H1 (cell line): ENCODE measurements at regions of chr2 and their contacts with region 1.

Region 1: DNA sequence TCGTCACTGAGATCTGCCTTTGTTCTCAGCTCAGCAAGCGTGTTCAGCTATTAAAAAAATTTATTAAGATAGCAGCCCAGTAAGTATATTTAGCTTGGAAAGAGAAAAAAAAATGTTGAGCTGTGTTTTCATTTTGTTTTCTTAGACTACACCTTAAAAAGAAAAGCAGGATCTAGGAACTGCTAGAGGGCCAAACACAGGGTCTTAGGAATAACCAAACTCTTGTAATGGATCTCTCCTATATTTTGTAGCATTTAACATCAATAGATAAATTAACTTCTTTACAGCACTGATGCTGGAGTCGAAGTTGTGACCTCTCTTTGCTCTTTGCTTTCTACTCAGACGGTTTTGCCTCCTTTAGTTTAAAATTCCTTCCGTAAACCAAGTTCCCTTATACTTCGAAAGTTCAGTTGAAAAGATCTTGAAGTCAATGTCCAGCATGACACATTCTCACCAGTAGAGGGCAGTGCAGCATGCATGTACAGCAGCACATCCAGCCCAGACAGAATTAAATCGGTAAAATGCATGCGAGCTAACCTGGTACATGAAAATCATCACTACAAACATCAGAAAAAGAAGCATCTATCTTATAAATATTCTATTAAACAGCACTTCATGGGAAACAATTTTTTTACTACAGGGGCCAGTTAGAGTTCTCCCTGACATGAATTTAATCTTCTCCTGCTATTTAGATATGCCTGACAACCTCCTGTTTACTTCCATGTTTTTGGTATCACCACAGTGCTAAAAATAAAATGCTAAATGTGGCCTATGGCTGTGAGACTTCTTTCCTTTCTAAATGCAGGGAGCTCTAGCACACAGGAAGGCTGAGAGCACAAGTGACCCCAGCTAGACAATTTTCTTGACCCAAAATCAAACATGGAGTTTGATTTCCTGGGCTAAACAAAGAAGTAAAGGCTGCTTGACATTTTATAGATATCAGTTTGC is 48.2 kb upstream of the MAP3K20 start:
- DNase-seq: peak; percentile 44 to 85
- H3K4me3 ChIP-seq: no peak overlapping the region
- H3K27ac ChIP-seq: no peak overlapping the region
- H3K4me1 ChIP-seq: peaks cover 0 to 3% (median 0%) of the 10 kb centered on the region in 4 experiments; a peak in 1 of 7 replicates
- H3K27me3 ChIP-seq: no peaks in the 10 kb centered on the region
- CTCF ChIP-seq: peak; percentile 57 to 96 (median 83)
- EP300 ChIP-seq: no peak
- POLR2A ChIP-seq: no peak
- RAD21 ChIP-seq: peak; percentile 95 to 96

Region 2: GRCh38 chr2:173037245-173038120 is 10.0 kb after region 1 on chr2:
- CTCF ChIA-PET with region 1: interaction called, 14 read pairs
- POLR2A ChIA-PET with region 1: no interaction called
- DNase-seq: no peak
- H3K4me3 ChIP-seq: no peak overlapping the region
- H3K27ac ChIP-seq: no peak overlapping the region
- H3K4me1 ChIP-seq: no peaks in the 10 kb centered on the region
- H3K27me3 ChIP-seq: no peaks in the 10 kb centered on the region
- CTCF ChIP-seq: no peak
- EP300 ChIP-seq: no peak
- POLR2A ChIP-seq: no peak
- RAD21 ChIP-seq: no peak

Region 3: DNA sequence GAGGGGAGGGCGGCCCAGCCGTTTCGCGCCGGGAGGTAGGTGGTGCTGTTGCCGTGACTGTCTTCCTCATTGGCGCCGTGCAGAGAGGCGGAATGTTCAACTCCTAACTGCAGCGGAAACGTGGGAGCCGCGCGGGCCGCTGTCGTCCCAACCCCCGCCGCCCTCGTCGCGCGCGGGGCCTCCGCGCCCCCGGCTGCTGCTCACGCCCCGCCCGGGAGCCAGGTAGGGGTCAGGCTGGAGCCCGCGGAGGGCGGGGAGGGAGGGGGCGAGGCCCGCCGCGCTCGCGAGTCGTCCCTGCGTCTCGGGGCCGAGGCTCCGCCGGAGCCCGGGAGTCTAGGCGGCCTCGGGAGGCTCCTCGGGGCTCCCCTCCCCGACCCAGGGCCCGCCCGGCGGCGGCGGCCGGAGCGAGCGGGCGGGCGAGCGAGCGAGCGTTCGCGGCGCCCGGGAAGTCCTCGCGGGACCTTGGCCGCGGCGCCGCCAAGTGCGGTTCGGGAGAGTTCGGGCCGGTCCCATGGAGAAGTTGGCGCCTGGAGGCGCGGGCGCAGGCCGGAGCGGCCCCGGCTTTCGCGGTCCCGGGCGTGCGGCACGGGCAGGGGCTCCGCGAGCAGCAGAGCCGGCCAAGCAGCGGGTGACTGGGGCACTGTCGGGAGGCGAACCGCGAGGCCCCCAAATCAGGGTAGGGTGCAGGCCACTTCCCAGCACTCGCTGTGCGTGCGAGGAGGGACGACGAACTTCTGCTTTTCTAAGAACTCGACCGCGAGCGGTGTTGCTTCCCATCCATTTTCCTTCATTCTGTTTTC is 48.5 kb after region 1 on chr2 and contains the start of gene MAP3K20:
- CTCF ChIA-PET with region 1: interaction called, 10 read pairs
- POLR2A ChIA-PET with region 1: no interaction called
- DNase-seq: peak in 1 of 2 experiments; percentile 77
- H3K4me3 ChIP-seq: peak within 1 kb of the TSS; percentile 42 to 85 (median 78)
- H3K27ac ChIP-seq: no peak within 1 kb of the TSS
- H3K4me1 ChIP-seq: peaks cover 0 to 3% (median 1%) of the 10 kb centered on the region in 4 experiments; a peak in 3 of 7 replicates
- H3K27me3 ChIP-seq: no peaks in the 10 kb centered on the region
- CTCF ChIP-seq: peak in 2 of 3 experiments; percentile 14 to 51; a peak in 2 of 4 replicates
- EP300 ChIP-seq: no peak
- POLR2A ChIP-seq: peak in 1 of 2 experiments; percentile 68; a peak in 2 of 3 replicates
- RAD21 ChIP-seq: peak in 1 of 2 experiments; percentile 20; a peak in 1 of 4 replicates
- total RNA-seq, gene MAP3K20: 8.5 and 11.1 TPM in 2 replicates

Region 4: DNA sequence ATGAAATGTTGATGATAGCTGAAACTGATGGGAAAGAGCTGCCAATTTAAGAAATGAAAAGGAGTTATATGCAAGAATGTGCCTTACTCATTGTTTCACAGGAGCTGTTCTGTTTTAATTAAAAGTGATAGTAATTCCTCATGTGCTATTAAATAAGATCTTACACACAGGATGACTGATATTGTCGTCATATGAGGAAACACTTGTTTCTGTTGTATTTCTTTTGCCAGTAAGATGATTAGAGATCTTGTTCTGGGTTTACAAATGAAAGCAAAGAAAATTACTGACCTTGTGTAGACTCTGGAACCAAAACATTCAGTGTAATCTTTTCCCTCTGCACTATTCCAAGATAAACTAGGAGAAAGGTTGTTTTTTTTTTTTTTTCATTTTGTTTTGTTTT is 171.8 kb after region 1 on chr2:
- CTCF ChIA-PET with region 1: interaction called, 22 read pairs
- POLR2A ChIA-PET with region 1: no interaction called
- DNase-seq: no peak
- H3K4me3 ChIP-seq: no peak overlapping the region
- H3K27ac ChIP-seq: no peak overlapping the region
- H3K4me1 ChIP-seq: peaks cover 4 to 9% (median 7%) of the 10 kb centered on the region in 4 experiments; a peak in 5 of 7 replicates
- H3K27me3 ChIP-seq: no peaks in the 10 kb centered on the region
- CTCF ChIP-seq: no peak
- EP300 ChIP-seq: no peak
- POLR2A ChIP-seq: no peak
- RAD21 ChIP-seq: no peak

Region 5: GRCh38 chr2:173402405-173402974 is 375.0 kb after region 1 on chr2:
- CTCF ChIA-PET with region 1: interaction called, 16 read pairs
- POLR2A ChIA-PET with region 1: no interaction called
- DNase-seq: peak; percentile 58 to 83
- H3K4me3 ChIP-seq: peak overlapping the region in 3 of 4 experiments; percentile 20 to 50 (median 27); a peak in 3 of 8 replicates
- H3K27ac ChIP-seq: no peak overlapping the region
- H3K4me1 ChIP-seq: peaks cover 3 to 10% (median 6%) of the 10 kb centered on the region in 4 experiments; a peak in 4 of 7 replicates
- H3K27me3 ChIP-seq: no peaks in the 10 kb centered on the region; a peak in 2 of 7 replicates
- CTCF ChIP-seq: peak; percentile 78 to 93 (median 92)
- EP300 ChIP-seq: no peak
- POLR2A ChIP-seq: no peak
- RAD21 ChIP-seq: peak; percentile 98 to 99